AG04450 (cell line): ENCODE measurements at regions of chr1 and their contacts with region 1.

Region 1: DNA sequence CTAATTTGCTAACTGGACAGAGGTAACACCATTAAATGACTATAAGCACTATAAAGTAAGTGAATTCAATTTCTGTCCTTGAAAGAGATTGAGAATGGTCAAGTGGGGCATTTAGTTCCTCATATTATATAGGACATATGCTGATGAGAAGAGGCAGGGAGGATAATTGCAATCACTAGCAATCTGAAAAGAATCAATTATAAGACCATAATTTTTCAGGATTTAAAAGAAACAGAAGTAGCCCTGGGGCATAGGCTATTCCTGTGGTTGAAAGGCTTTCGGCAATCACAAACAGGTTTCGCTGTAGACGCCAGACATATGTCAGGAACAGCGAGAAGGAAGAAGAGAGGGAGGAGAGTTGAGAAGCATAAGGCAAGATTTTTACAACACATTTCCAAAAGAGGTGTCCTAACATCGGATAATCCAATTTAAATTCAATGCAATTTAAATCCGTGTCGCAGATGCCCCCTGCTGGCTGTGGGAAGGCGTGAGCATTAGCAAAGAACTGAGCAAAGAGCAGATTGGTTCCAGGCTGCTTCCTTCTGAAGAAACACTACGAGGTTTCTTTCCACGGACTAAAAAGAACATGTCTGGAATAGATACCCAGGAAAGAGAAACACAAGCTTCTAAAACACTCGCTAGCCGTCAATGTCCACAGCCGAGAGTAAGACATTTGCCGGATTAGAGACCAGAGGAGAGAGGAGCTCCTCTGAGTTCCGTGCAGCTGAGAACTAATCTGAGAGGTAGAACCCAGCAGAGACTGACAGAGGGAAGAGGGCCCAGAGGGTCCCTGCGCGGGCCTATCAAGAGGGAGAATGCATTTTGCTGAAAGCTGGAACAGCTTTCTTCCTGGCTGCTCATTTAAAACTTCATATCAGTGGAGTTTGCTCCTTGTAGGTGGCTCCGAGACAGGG is 27.9 kb downstream of the RGS5 start:
- DNase-seq: peak; percentile 29
- H3K4me3 ChIP-seq: no peak overlapping the region
- H3K27ac ChIP-seq: no peak overlapping the region
- H3K27me3 ChIP-seq: no peaks in the 10 kb centered on the region
- CTCF ChIP-seq: peak; percentile 94

Region 2: DNA sequence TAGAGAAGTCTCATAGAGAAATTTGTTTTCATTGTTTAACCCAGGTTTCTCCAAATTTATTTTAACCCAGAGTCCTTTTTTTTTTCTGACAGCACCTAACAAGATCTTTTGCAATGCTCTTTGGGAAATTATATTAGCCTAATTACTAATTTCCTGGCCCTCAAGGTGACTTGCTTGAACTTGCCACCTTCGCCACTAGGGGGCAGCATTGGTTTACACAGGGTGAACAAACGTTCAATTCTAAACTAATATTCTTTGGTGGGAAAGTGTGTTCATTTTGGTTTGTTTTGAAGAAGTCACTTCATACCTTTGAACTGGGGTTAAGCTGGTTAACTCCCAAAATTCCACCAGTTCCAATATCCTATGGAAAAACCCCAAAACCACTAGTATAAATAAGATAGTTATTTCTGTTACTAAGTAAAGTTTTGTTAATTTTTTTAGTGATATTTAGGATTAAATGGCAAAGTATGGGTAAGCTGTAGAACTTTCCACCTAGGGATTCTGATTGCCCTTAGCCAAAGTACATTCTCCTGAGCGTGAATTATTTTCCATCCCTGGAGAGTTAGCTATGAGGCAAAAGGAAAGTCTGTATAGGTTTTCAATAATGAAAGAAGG is 326.8 kb before region 1 on chr1:
- CTCF ChIA-PET with region 1: interaction called, 64 read pairs
- POLR2A ChIA-PET with region 1: no interaction called
- DNase-seq: peak; percentile 67
- H3K4me3 ChIP-seq: no peak overlapping the region
- H3K27ac ChIP-seq: no peak overlapping the region
- H3K27me3 ChIP-seq: no peaks in the 10 kb centered on the region
- CTCF ChIP-seq: peak; percentile 91

Region 3: DNA sequence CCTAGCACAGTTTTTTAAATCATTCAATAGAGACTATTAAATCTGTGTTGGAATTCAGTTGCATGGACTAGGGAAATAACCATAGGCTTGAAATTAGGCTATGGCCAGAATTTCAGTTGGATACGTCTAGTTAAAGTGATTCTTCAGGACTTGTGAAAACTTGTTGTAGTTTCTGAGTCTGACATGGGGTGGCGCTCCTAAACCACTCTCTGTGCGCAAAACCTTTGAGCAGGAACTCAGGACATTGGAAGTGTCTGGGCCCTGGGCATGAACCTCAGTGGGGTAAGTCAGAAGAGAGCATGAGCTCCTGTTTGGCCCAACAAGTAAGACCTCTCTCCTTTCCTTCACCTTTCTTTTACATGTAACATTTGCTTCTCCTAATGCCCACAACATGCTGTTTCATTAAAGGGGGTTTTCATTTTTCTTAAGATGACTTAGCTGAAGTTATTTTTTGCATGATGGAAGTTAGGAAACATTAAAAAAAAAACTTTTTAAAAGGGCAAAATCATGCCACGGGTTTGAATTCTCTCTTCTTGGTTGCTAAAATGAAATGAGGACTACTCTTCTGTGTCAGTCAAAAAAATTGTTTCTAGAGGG is 296.7 kb before region 1 on chr1:
- CTCF ChIA-PET with region 1: interaction called, 63 read pairs
- POLR2A ChIA-PET with region 1: no interaction called
- DNase-seq: peak; percentile 38
- H3K4me3 ChIP-seq: no peak overlapping the region
- H3K27ac ChIP-seq: no peak overlapping the region
- H3K27me3 ChIP-seq: no peaks in the 10 kb centered on the region
- CTCF ChIP-seq: peak; percentile 84

Region 4: DNA sequence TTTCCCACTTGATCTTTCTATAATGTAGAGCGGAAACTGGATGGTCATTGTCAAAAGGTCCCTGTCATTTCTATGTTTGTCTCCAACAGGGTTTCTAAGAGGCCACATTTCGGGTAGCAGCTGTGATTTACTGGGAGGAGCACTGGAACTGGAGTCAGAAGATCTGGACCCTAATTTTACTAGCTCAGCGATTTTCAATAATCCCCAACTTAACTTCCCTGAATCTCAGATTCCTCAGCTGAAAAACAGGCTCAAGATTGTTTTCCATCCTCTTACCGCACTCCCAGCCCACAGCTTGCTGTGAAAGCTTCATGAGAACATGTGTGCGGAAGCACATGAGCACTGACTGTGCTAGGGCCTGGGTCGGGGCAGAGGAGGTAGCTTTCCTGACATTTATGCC is 125.5 kb before region 1 on chr1:
- CTCF ChIA-PET with region 1: no interaction called
- POLR2A ChIA-PET with region 1: no interaction called
- DNase-seq: no peak
- H3K4me3 ChIP-seq: no peak overlapping the region
- H3K27ac ChIP-seq: no peak overlapping the region
- H3K27me3 ChIP-seq: no peaks in the 10 kb centered on the region
- CTCF ChIP-seq: no peak

Region 5: DNA sequence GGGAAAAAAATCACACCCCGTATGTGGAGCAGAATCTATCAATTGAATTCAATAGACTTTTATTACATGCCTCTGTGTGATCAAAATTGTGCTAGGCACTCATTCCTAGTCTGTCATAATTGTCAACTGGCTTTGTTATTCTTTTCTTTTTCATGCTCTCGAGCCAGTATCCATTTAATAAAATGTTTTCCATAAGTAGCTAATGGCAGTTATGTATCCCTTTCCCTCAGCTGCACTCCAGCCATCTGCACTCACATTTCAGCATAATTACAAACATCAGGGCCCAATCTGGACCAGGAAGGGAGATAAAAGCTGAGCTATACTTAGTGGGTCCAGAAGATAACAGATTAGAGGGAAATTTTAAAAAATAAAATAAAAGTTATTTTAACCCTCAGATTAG is 12.1 kb after region 1 on chr1:
- CTCF ChIA-PET with region 1: interaction called, 54 read pairs
- POLR2A ChIA-PET with region 1: no interaction called
- DNase-seq: no peak
- H3K4me3 ChIP-seq: no peak overlapping the region
- H3K27ac ChIP-seq: no peak overlapping the region
- H3K27me3 ChIP-seq: no peaks in the 10 kb centered on the region
- CTCF ChIP-seq: no peak

Region 6: GRCh38 chr1:163202833-163203451 is 28.2 kb after region 1 on chr1 and contains the start of gene RGS5:
- CTCF ChIA-PET with region 1: interaction called, 16 read pairs
- POLR2A ChIA-PET with region 1: no interaction called
- DNase-seq: no peak
- H3K4me3 ChIP-seq: no peak within 1 kb of the TSS
- H3K27ac ChIP-seq: peak within 1 kb of the TSS; percentile 48
- H3K27me3 ChIP-seq: no peaks in the 10 kb centered on the region
- CTCF ChIP-seq: no peak
- polyA plus RNA-seq, gene RGS5: 11.3 and 13.8 TPM in 2 replicates